Prostate gland (tissue), 2 donors: ENCODE measurements at regions of chr11 and their contacts with region 1.

Region 1: DNA sequence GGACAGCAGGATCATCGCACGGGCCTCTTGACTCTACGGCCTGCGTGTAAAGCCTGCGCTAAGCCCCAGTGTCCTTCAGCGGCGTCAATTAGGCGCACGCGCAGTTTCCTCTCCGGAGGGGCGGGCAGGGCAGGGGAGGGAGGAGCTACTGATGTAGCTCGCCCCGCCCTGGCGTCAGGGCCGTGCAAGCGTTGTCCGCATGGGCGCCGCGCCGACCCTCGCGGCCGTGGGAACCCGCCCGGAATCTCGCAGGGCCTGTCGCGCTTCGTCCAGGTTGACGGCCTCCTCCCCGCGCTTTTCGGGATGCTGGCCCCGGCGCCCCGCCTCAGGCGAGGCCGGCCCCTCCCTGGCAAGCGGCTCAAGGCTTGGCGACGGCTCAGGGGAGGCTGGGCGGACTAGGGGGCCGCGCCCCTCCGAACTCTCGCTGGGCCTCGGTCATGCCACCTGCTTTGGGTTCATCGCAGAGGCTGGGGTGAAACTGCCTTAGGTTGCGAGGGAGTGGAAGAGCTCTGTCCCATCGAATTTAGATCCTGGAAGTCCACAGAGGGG is 61.1 kb downstream of the ST3GAL4 start:
- DNase-seq: peak; percentile 71
- H3K4me3 ChIP-seq: peak overlapping the region; percentile 29 to 38
- H3K27ac ChIP-seq: peak overlapping the region; percentile 69 to 78
- H3K4me1 ChIP-seq: peaks cover 4% of the 10 kb centered on the region
- H3K27me3 ChIP-seq: no peaks in the 10 kb centered on the region
- CTCF ChIP-seq: peak in 1 of 4 experiments; percentile 19
- POLR2A ChIP-seq: peak; percentile 40

Region 2: DNA sequence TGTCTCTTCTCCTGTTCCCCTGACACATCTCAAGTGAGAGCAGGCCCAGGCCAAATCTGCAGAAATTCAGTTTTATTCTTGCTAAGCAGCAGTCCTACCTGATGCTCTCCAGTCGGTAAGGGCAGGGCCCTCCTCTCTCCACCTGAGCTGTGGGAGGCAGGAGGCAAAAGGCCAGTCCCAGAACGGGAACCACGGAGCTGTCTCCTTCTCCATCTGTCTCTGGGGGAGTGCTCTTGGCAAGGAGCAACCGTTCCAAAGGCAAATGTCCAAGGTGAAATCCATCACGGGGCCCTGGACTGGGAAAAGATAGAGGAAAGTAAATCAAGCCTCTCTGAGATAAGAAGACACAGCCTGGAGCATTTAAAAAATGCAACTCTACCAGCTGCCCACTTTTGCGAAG is 288.7 kb before region 1 on chr11:
- intact Hi-C with region 1: no loop called
- DNase-seq: no peak
- H3K4me3 ChIP-seq: no peak overlapping the region
- H3K27ac ChIP-seq: no peak overlapping the region
- H3K4me1 ChIP-seq: no peaks in the 10 kb centered on the region
- H3K27me3 ChIP-seq: no peaks in the 10 kb centered on the region
- CTCF ChIP-seq: no peak
- POLR2A ChIP-seq: no peak

Region 3: GRCh38 chr11:126318574-126319373 is 97.8 kb before region 1 on chr11:
- intact Hi-C with region 1: loop called (anchors 5 kb)
- DNase-seq: peak; percentile 45
- H3K4me3 ChIP-seq: no peak overlapping the region
- H3K27ac ChIP-seq: peak overlapping the region; percentile 43 to 62
- H3K4me1 ChIP-seq: no peaks in the 10 kb centered on the region
- H3K27me3 ChIP-seq: no peaks in the 10 kb centered on the region
- CTCF ChIP-seq: no peak
- POLR2A ChIP-seq: no peak

Region 4: GRCh38 chr11:126355324-126355925 is 61.2 kb before region 1 on chr11 and contains the start of gene ST3GAL4:
- intact Hi-C with region 1: loop called (anchors 5 kb)
- DNase-seq: peak; percentile 60
- H3K4me3 ChIP-seq: peak within 1 kb of the TSS; percentile 62 to 70
- H3K27ac ChIP-seq: peak within 1 kb of the TSS; percentile 71 to 73
- H3K4me1 ChIP-seq: no peaks in the 10 kb centered on the region
- H3K27me3 ChIP-seq: no peaks in the 10 kb centered on the region
- CTCF ChIP-seq: no peak
- POLR2A ChIP-seq: no peak
- total RNA-seq, gene ST3GAL4: 29.2 to 192 TPM